ENCODE measurements at regions of chr1 and their contacts with region 1.

Region 1: GRCh38 chr1:110460253-110461220 is 9.6 kb downstream of the PROK1 start:
- DNase-seq: peak; percentile 78
- H3K4me3 ChIP-seq: no peak overlapping the region
- H3K27ac ChIP-seq: no peak overlapping the region
- H3K4me1 ChIP-seq: no peaks in the 10 kb centered on the region
- H3K27me3 ChIP-seq: no peaks in the 10 kb centered on the region
- CTCF ChIP-seq: peak; percentile 90 to 95 (median 94)
- EP300 ChIP-seq: no peak
- POLR2A ChIP-seq: no peak

Region 2: GRCh38 chr1:110203021-110203661 is 257.4 kb before region 1 on chr1:
- intact Hi-C with region 1: loop called (anchors 1 kb)
- DNase-seq: no peak
- H3K4me3 ChIP-seq: no peak overlapping the region
- H3K27ac ChIP-seq: no peak overlapping the region
- H3K4me1 ChIP-seq: no peaks in the 10 kb centered on the region
- H3K27me3 ChIP-seq: no peaks in the 10 kb centered on the region
- CTCF ChIP-seq: peak; percentile 74 to 90 (median 82)
- EP300 ChIP-seq: no peak
- POLR2A ChIP-seq: no peak

Region 3: GRCh38 chr1:110412576-110412975 is 48.0 kb before region 1 on chr1:
- intact Hi-C with region 1: loop called (anchors 1 kb)
- DNase-seq: peak; percentile 69
- H3K4me3 ChIP-seq: no peak overlapping the region
- H3K27ac ChIP-seq: no peak overlapping the region
- H3K4me1 ChIP-seq: peaks cover 0 to 11% (median 7%) of the 10 kb centered on the region in 4 donors
- H3K27me3 ChIP-seq: no peaks in the 10 kb centered on the region
- CTCF ChIP-seq: peak; percentile 23 to 66 (median 48)
- EP300 ChIP-seq: no peak
- POLR2A ChIP-seq: no peak

Measured in sigmoid colon (tissue), 7 donors.